WTC11 (cell line): ENCODE measurements at regions of chr1 and their contacts with region 1.

Region 1: GRCh38 chr1:114152508-114153260 is 985 bp downstream of the SYT6 start:
- DNase-seq: peak; percentile 57
- ATAC-seq: peak; percentile 15
- H3K4me3 Mint-ChIP-seq: peak overlapping the region; percentile 80
- H3K27ac Mint-ChIP-seq: no peak overlapping the region
- H3K4me1 Mint-ChIP-seq: peaks cover 76% of the 10 kb centered on the region
- H3K27me3 Mint-ChIP-seq: peaks cover 27% of the 10 kb centered on the region
- CTCF ChIP-seq: no peak

Region 2: GRCh38 chr1:114118351-114118990 is 34.2 kb before region 1 on chr1:
- CTCF ChIA-PET with region 1: interaction called, 13 read pairs
- POLR2A ChIA-PET with region 1: interaction called, 3 read pairs
- DNase-seq: peak; percentile 63
- ATAC-seq: peak; percentile 77
- H3K4me3 Mint-ChIP-seq: no peak overlapping the region
- H3K27ac Mint-ChIP-seq: peak overlapping the region; percentile 92
- H3K4me1 Mint-ChIP-seq: peaks cover 84% of the 10 kb centered on the region
- H3K27me3 Mint-ChIP-seq: no peaks in the 10 kb centered on the region; the same call in 1 of the 2 replicates
- CTCF ChIP-seq: no peak

Region 3: DNA sequence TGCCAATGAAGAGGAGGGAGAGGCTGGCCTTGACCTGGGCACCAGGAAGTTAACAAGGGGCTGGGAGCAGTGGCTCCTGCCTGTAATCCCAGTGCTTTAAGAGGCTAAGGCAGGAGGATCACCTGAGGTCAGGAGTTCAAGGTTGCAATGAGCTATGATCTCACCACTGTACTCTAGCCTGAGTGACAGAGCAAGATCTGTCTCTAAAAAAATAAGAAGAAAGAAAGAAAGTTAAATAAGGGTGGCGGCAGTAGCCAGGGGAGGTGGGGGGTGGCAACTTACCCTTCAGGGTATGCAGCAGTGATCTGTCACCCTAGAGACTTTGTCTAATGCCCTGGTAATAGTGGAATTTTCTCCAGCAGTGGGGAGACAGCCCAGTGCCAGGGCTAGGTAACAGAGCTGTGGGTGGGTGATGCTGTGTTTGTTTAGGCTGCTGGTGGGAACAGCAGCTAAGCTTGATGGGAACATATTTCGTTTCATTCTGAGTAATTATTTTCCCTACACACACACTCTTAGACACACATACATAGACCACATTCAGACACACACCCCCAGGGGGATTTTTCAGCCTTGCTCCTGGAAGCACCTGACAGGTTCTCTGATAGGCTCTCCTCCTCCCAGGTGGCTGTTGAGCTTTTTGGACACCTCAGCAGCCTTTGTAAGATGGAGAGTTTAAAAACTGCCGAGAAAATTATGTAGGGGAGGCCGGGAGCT is 12.3 kb after region 1 on chr1:
- CTCF ChIA-PET with region 1: interaction called, 10 read pairs
- POLR2A ChIA-PET with region 1: no interaction called
- DNase-seq: no peak
- ATAC-seq: no peak
- H3K4me3 Mint-ChIP-seq: no peak overlapping the region
- H3K27ac Mint-ChIP-seq: no peak overlapping the region
- H3K4me1 Mint-ChIP-seq: peaks cover 6% of the 10 kb centered on the region
- H3K27me3 Mint-ChIP-seq: peaks cover 47% of the 10 kb centered on the region
- CTCF ChIP-seq: no peak